Cardiac septum (tissue), 1 donor: ENCODE measurements at regions of chr17 and their contacts with region 1.

Region 1: GRCh38 chr17:19362277-19363113 is at the start of gene B9D1:
- DNase-seq: peak; percentile 98
- total RNA-seq, gene B9D1: 9.7 TPM

Region 2: DNA sequence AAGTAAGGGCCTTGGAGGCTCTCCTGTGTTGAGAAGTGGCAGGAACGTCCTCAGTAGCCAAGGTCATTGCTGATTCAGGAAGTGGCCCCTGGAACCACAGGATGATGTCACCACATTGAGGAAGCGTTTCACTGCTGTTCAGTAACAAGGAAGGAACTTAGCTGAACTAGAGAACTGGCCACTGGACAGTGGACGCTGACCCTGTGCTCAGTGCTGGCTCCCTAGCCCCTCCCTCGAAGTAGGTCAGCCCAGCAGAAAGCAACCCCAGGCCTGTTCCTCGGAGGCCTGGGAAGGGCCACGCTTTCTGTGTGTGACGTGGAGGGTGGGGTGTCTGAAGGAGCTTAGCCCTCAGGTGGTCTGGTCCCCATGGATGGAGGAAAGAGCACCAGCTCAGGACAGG is 58.3 kb before region 1 on chr17:
- intact Hi-C with region 1: no loop called
- DNase-seq: peak; percentile 88

Region 3: DNA sequence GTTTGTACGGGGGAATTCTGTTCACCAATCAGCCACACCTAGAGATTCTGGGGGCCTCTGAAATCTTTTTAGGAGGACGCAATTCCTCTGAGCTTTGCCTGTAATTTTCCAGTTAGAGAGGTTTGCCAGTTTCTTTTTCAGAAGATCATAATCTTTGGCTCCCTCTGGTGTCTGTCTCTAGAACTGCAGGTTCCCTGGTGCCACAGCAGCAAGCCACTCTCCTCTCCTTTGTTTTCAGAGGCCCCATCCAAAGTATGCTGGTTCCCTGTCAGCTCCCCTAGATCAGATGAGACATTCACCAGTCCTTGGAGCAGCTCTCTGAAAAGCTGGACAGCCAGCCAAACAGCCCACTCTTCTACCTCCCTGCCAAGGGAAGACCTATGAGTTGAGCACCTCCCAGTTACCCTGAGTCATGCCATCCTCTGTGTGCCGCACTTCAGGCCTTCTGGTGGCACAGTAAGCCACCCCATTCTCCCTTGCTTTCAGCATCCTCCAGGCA is 84.6 kb after region 1 on chr17:
- intact Hi-C with region 1: loop called (anchors 1 kb)
- DNase-seq: peak; percentile 75

Region 4: DNA sequence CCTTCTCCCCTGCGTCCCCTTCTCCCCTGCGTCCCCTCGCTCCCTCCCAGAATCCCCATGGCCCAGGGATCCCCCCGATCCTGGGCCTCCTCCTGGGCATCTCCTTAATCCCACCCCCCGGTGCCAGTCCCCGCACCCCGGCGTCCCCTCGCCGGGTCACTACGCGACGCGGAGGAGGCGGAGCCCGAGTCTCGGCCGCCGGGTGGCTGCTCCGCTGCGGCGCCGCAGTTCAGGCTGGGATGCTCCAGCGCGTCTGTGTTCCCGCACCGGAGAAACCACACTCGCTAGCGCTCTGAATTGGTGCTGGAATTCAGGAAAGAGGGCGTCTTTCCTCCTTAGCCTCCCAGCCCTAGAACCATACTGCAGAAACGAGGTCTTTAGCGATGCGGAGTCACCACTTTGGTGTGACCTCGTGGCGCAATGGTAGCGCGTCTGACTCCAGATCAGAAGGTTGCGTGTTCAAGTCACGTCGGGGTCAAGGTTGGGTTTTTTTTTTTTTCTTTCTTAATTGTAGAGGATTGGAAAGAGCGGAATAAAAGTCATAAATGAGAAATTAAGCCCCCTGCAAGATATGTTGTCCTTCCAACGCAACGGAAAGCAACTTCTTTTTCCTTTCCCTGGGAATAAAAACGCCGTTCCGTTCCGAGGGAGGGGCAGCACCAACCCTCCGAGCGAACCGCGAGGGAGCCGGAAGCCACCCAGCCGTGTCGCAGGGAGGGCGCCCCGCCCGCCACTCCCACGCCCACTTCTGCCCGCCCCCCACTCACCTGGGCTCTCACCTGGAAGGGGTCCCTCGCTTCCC is 145.5 kb after region 1 on chr17:
- intact Hi-C with region 1: loop called (anchors 10 kb)
- DNase-seq: peak; percentile 92

Region 5: DNA sequence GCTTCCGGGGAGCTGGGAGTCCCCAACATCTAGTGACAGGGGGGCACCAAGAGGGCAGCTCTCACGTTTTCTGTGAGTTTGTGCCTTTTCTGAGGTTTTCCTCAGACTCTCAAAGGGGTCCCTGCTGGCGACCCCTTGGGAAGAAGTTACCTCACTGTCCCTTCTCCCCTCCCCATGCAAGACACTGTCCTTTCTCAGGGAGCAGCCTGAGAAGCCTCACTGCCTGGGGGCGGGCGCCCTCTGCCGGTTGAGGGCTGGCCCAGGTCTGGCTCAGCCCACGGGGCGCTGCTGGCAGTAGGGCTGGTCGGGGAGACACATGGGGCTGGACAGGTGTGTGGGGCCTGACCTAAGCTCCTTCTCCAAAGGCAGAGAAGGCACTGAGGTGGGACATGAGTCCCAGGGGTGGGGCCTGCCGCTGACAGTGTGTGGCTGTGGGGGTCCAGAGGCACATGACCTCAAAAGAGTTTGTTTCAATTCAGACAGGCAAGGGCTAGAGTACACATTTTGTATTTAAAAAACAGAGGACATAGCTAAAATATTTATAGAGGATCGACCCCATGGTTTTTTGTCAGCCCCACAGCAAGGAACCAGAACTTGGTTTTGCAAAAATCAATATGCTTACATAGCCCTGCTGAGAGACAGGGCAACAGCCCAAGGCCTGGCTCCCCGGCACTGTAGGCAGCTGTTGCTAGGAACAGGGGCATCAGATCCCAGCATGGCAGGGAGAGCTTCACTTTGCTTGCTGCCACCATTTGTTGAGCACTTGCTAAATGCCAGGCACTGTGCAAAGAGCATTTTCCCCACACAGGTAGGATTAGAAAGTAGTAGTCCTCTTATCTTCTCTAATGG is 404.2 kb after region 1 on chr17:
- intact Hi-C with region 1: loop called (anchors 2 kb)
- DNase-seq: peak; percentile 87